ENCODE measurements at regions of chr22 and their contacts with region 1.

Region 1: DNA sequence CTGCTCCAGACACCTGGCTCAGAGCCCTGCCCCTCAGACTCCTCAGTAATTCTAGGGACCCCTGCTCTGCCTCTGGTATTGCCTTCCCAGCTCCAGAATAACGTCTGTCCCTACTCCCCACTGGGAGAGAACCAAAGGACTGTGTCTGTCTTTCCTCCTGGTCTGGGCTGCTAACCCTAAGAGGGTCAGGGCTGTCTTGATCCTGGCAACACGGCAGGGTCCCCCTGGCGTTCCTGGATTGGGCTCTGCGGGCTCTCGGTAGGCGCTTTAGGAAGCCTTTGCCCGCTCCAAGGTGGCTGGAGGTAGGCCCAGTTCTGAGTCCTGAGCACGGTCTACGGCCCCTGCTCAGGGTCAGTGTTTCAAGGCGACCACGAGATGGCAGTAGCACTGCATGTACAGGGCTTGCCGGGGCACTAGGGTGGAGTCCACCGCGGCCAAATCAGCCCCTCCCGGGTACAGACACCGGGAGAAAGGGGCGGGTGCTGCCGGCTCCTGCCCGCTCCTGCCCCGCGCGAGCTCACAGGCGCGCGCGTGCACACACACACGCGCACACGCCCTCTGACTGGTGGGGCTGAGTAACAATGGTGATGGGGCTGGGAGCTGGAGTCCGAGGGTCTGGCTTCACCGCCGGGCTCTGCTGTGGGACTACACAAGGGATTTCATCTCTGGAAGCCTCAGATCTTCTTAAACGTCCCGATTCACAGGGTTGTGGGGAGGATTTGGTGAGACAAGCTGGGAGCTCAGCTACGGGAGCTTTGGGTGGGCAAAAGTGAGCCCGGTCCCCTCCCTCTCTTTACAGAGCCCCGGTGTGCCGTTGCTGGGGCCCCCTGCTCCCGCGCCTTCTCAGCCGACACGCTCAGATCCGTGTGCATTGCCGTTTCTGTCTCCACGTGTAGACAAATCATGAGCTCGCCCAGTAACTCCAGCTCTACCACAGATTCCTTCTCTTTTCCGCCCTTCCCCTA is 30.1 kb upstream of the HMOX1 start:
- DNase-seq: peak; percentile 89
- H3K4me3 ChIP-seq: peak overlapping the region; percentile 56 to 75 (median 59)
- H3K27ac ChIP-seq: peak overlapping the region; percentile 70
- H3K4me1 ChIP-seq: peaks cover 14% of the 10 kb centered on the region
- H3K27me3 ChIP-seq: no peaks in the 10 kb centered on the region
- CTCF ChIP-seq: peak; percentile 79 to 90
- POLR2A ChIP-seq: peak; percentile 75

Region 2: DNA sequence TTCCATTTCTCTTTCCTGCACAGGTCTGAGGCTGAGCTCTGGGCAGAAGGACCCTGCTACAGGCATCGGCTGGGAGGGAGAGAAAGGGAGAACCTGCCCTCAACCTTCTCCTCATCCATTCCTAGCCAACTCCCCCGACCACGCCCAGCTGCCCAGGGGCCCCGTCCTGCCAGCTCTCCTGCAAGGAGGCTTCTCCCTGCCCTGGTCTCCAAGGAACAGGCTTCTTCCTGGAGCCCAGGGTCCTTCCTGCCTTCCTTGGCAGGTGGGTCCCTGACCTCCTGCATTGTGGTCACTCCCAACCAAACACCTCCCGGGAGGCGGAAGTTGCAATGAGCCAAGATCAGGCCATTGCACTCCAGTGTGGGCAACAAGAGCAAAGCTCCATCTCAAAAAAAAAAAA is 17.6 kb after region 1 on chr22:
- CTCF ChIA-PET with region 1: interaction called, 10 read pairs
- POLR2A ChIA-PET with region 1: interaction called, 6 read pairs
- dilution Hi-C with region 1: no loop called
- intact Hi-C with region 1: loop called (anchors 2 kb)
- DNase-seq: no peak
- H3K4me3 ChIP-seq: no peak overlapping the region
- H3K27ac ChIP-seq: no peak overlapping the region
- H3K4me1 ChIP-seq: peaks cover 10% of the 10 kb centered on the region
- H3K27me3 ChIP-seq: no peaks in the 10 kb centered on the region
- CTCF ChIP-seq: no peak
- POLR2A ChIP-seq: no peak

Region 3: DNA sequence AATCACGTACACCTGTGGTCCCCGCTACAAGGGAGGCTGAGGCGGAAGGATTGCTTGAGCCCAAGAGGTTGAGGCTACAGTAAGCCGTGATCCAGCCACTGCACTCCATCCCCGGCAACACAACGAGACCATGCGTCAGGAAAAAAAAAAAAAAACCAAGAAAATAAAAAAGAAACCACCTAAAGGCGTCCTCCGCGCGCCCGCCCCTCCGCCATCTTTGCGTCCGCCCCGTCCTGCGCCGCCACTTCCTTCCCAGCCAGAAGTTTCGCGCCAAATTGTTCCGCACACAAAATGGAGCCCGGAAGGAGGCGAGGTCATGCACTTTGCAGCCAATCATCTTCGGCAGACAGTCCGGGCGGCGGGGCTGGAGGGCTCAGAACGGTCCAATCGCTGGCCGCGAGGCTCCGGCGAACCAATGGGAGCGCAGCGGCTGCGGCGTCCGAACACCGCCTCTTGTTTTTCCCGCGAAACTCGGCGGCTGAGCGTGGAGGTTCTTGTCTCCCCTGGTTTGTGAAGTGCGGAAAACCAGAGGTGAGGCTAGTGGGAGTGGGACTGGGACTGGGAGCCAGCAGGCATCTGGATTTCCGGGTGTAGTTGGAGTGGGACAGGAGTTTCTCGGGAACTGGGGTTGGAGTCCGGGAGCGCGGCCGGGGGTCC is 49.0 kb after region 1 on chr22 and contains the start of gene MCM5:
- CTCF ChIA-PET with region 1: interaction called, 6 read pairs
- POLR2A ChIA-PET with region 1: interaction called, 10 read pairs
- dilution Hi-C with region 1: no loop called
- intact Hi-C with region 1: loop called (anchors 1 kb)
- DNase-seq: peak; percentile 98
- H3K4me3 ChIP-seq: peak within 1 kb of the TSS; percentile 80 to 99 (median 89)
- H3K27ac ChIP-seq: peak within 1 kb of the TSS; percentile 82
- H3K4me1 ChIP-seq: peaks cover 17% of the 10 kb centered on the region
- H3K27me3 ChIP-seq: no peaks in the 10 kb centered on the region
- CTCF ChIP-seq: no peak
- POLR2A ChIP-seq: peak; percentile 67
- total RNA-seq, gene MCM5: 111 and 125 TPM in 2 replicates

Region 4: GRCh38 chr22:35622191-35622913 is 271.5 kb after region 1 on chr22:
- CTCF ChIA-PET with region 1: interaction called, 13 read pairs
- POLR2A ChIA-PET with region 1: no interaction called
- dilution Hi-C with region 1: no loop called
- intact Hi-C with region 1: loop called (anchors 1 kb)
- DNase-seq: no peak
- H3K4me3 ChIP-seq: no peak overlapping the region
- H3K27ac ChIP-seq: no peak overlapping the region
- H3K4me1 ChIP-seq: no peaks in the 10 kb centered on the region
- H3K27me3 ChIP-seq: peaks cover 3 to 4% of the 10 kb centered on the region in 2 experiments
- CTCF ChIP-seq: no peak
- POLR2A ChIP-seq: no peak

Region 5: GRCh38 chr22:35914665-35915476 is 564.0 kb after region 1 on chr22:
- CTCF ChIA-PET with region 1: interaction called, 3 read pairs
- POLR2A ChIA-PET with region 1: interaction called, 4 read pairs
- dilution Hi-C with region 1: no loop called
- intact Hi-C with region 1: loop called (anchors 10 kb)
- DNase-seq: peak; percentile 88
- H3K4me3 ChIP-seq: peak overlapping the region; percentile 26 to 68 (median 28)
- H3K27ac ChIP-seq: peak overlapping the region; percentile 27
- H3K4me1 ChIP-seq: peaks cover 35% of the 10 kb centered on the region
- H3K27me3 ChIP-seq: no peaks in the 10 kb centered on the region
- CTCF ChIP-seq: no peak
- POLR2A ChIP-seq: peak; percentile 36

Measured in endothelial cell of umbilical vein (primary cell).